Ascending aorta (tissue), 2 donors: ENCODE measurements at regions of chr11 and their contacts with region 1.

Region 1: DNA sequence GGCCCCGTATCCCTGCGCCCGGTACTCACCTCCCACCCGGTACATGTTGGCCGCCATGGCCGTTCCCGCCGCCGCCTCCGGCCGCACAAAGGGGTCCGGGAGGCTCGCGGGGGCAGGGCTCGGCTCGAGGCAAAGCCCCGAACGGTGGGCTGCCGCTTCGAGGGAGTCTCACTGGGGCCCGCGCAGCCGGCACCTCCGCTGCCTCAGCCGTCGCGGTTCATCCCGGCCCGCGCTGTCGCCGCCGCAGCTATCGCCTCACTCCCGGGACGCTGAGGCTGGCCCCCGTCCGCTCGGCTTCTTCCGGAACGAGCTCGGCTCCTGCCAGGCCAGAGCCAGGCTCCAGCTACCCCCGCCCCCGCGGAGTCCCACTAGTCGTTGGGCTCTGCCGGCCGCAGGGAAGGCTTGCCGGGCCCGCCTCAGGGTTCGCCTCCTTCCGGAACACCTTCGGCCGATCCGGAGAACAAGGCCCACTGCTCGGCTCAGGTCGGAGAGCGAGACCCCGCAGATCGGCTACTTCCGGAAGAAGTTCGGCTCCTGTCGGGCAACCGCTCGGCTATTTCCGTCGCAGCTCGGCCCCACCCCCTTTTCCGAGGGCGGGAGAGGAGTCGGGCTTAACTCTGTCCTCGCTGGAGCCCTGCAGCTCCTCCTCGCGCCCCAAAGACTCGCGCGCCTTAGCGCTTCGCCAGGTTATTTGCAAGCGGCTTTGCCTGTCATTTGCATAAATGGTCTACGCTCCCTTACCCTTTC is at the start of gene MTA2:
- DNase-seq: peak; percentile 89 to 98
- H3K4me3 ChIP-seq: peak within 1 kb of the TSS; percentile 87 to 98
- H3K27ac ChIP-seq: peak within 1 kb of the TSS; percentile 96 to 97
- H3K4me1 ChIP-seq: peaks cover 8 to 20% of the 10 kb centered on the region in 2 donors
- H3K27me3 ChIP-seq: no peaks in the 10 kb centered on the region
- CTCF ChIP-seq: no peak
- total RNA-seq, gene MTA2: 79.2 TPM

Region 2: DNA sequence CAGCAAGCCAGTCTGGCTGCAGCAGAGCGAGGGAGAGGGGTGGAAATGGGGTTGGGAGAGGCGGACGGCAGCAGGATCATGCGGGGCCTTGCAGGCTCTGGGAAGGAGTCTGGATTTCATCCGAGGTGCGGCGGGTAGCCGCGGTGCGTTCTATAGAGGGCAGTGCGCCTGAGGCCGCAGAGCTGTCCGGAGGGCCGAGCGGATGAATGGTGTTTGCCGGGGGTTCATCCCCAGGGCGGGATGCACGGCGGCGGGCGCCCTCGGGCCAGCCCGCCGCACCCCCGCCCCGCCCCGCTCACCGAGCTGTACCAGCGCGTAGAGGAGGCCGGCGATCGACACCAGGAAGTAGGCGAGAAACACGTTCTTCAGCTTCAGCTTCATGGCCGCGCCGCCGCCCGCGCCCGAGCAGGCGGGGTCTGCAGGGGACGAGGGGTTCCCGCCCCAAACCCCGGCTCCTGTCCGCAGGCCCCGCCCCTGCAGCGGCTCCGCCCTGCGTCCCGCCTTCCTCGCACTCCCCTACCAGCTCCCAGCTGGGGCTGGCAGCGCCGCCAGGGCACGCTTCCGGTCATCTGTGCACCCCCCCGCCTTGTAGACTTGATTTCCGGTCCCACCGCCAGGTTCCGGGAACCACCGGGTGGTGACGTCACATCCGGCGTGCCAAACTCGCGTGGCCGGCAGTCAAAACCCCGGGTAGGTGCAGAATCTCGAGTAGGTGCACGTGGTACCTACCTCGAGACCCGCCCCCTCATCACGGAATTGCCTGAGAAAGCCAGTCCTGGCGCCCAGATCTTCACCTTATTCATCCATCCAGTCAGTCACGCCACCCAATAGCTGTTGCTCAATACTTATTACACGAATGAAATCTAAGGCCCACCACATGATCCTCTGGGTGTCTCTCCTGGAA is 20.3 kb after region 1 on chr11 and contains the start of gene B3GAT3:
- intact Hi-C with region 1: loop called (anchors 2 kb)
- DNase-seq: peak; percentile 92 to 99
- H3K4me3 ChIP-seq: peak within 1 kb of the TSS; percentile 69 to 93
- H3K27ac ChIP-seq: peak within 1 kb of the TSS; percentile 67 to 92
- H3K4me1 ChIP-seq: peaks cover 4 to 10% of the 10 kb centered on the region in 2 donors
- H3K27me3 ChIP-seq: no peaks in the 10 kb centered on the region
- CTCF ChIP-seq: peak in 1 of 3 experiments; percentile 1
- total RNA-seq, gene B3GAT3: 61.3 TPM